ENCODE measurements at regions of chr4 and their contacts with region 1.

Region 1: GRCh38 chr4:57182132-57182874 is 72.1 kb upstream of the IGFBP7 start:
- DNase-seq: peak; percentile 34 to 99 (median 91)
- H3K4me3 ChIP-seq: no peak overlapping the region
- H3K27ac ChIP-seq: peak overlapping the region in 52 of 59 donors; percentile 15 to 90 (median 75)
- H3K27me3 ChIP-seq: no peaks in the 10 kb centered on the region
- CTCF ChIP-seq: peak in 3 of 56 donors; percentile 15 to 29 (median 27)

Region 2: GRCh38 chr4:57254754-57255153 is 72.5 kb after region 1 on chr4:
- intact Hi-C with region 1: loop called in 1 of 2 experiments (anchors 2 kb)
- DNase-seq: no peak
- H3K4me3 ChIP-seq: no peak overlapping the region
- H3K27ac ChIP-seq: no peak overlapping the region
- H3K27me3 ChIP-seq: no peaks in the 10 kb centered on the region
- CTCF ChIP-seq: no peak